Endothelial cell of umbilical vein (primary cell): ENCODE measurements at regions of chr3 and their contacts with region 1.

Region 1: GRCh38 chr3:138915503-138916498 is 31.1 kb downstream of the FOXL2 start:
- DNase-seq: peak; percentile 88
- H3K4me3 ChIP-seq: peak overlapping the region; percentile 12 to 81 (median 64)
- H3K27ac ChIP-seq: peak overlapping the region; percentile 74
- H3K4me1 ChIP-seq: peaks cover 8% of the 10 kb centered on the region
- H3K27me3 ChIP-seq: no peaks in the 10 kb centered on the region
- CTCF ChIP-seq: peak; percentile 92 to 97
- POLR2A ChIP-seq: no peak

Region 2: GRCh38 chr3:138241061-138241460 is 674.7 kb before region 1 on chr3:
- CTCF ChIA-PET with region 1: no interaction called
- POLR2A ChIA-PET with region 1: no interaction called
- dilution Hi-C with region 1: no loop called
- intact Hi-C with region 1: no loop called
- DNase-seq: no peak
- H3K4me3 ChIP-seq: no peak overlapping the region
- H3K27ac ChIP-seq: no peak overlapping the region
- H3K4me1 ChIP-seq: no peaks in the 10 kb centered on the region
- H3K27me3 ChIP-seq: no peaks in the 10 kb centered on the region
- CTCF ChIP-seq: no peak
- POLR2A ChIP-seq: no peak

Region 3: DNA sequence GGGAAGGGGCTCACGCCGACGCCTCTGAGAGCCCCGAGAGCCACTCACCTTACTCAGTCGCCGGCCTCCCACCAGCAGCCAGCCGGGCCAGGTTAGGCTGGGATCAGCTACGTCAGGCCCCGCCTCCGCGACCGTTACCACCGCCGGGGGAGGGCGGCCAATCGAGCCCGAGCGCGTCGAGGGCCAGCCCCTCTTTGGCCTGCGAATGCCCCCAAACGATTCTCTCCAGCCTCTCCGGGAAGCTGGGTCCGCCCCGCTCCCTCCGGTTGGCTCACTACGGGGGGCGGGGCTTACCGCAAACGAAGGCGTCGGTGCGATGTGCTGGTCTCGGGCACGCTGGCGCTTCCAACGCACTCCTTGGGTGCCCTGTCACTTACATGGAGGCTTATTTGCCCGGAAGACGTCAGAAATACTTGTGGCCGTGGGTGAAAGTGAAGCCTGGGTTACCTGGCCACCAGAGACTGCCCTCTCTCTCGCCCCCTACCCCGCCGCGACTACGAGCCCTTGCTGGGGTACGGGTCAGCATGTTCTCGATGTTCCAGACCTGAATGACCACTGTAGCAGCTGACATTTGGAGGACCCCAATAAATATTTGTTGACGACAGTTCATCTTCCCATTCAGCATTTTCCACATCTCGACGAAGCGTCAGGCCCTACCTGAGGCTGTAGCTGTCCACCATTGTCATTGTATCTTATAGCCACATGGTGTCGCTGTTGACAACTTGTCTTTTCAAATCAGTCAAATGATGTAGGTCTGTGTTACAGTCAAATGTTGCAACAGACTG is 321.5 kb before region 1 on chr3 and contains the start of gene CEP70:
- CTCF ChIA-PET with region 1: interaction called, 182 read pairs
- POLR2A ChIA-PET with region 1: interaction called, 11 read pairs
- dilution Hi-C with region 1: no loop called
- intact Hi-C with region 1: loop called (anchors 1 kb)
- DNase-seq: peak; percentile 96
- H3K4me3 ChIP-seq: peak within 1 kb of the TSS; percentile 56 to 92 (median 63)
- H3K27ac ChIP-seq: peak within 1 kb of the TSS; percentile 46
- H3K4me1 ChIP-seq: no peaks in the 10 kb centered on the region
- H3K27me3 ChIP-seq: no peaks in the 10 kb centered on the region
- CTCF ChIP-seq: peak; percentile 72 to 84
- POLR2A ChIP-seq: peak; percentile 69
- total RNA-seq, gene CEP70: 14.7 and 16.9 TPM in 2 replicates

Region 4: GRCh38 chr3:138678086-138678485 is 237.7 kb before region 1 on chr3:
- CTCF ChIA-PET with region 1: interaction called, 11 read pairs
- POLR2A ChIA-PET with region 1: no interaction called
- dilution Hi-C with region 1: no loop called
- intact Hi-C with region 1: no loop called
- DNase-seq: no peak
- H3K4me3 ChIP-seq: no peak overlapping the region
- H3K27ac ChIP-seq: no peak overlapping the region
- H3K4me1 ChIP-seq: no peaks in the 10 kb centered on the region
- H3K27me3 ChIP-seq: no peaks in the 10 kb centered on the region
- CTCF ChIP-seq: no peak
- POLR2A ChIP-seq: no peak

Region 5: GRCh38 chr3:138726946-138727730 is 188.7 kb before region 1 on chr3:
- CTCF ChIA-PET with region 1: interaction called, 25 read pairs
- POLR2A ChIA-PET with region 1: no interaction called
- dilution Hi-C with region 1: no loop called
- intact Hi-C with region 1: no loop called
- DNase-seq: no peak
- H3K4me3 ChIP-seq: no peak overlapping the region
- H3K27ac ChIP-seq: no peak overlapping the region
- H3K4me1 ChIP-seq: peaks cover 2% of the 10 kb centered on the region
- H3K27me3 ChIP-seq: no peaks in the 10 kb centered on the region
- CTCF ChIP-seq: no peak
- POLR2A ChIP-seq: no peak

Region 6: GRCh38 chr3:138781012-138781470 is 134.8 kb before region 1 on chr3:
- CTCF ChIA-PET with region 1: interaction called, 54 read pairs
- POLR2A ChIA-PET with region 1: no interaction called
- dilution Hi-C with region 1: no loop called
- intact Hi-C with region 1: no loop called
- DNase-seq: no peak
- H3K4me3 ChIP-seq: no peak overlapping the region
- H3K27ac ChIP-seq: no peak overlapping the region
- H3K4me1 ChIP-seq: no peaks in the 10 kb centered on the region
- H3K27me3 ChIP-seq: no peaks in the 10 kb centered on the region
- CTCF ChIP-seq: no peak
- POLR2A ChIP-seq: no peak

Region 7: GRCh38 chr3:138834359-138835212 is 81.2 kb before region 1 on chr3 and contains the start of gene PIK3CB:
- CTCF ChIA-PET with region 1: interaction called, 34 read pairs
- POLR2A ChIA-PET with region 1: no interaction called
- dilution Hi-C with region 1: no loop called
- intact Hi-C with region 1: loop called (anchors 1 kb)
- DNase-seq: peak; percentile 85
- H3K4me3 ChIP-seq: peak within 1 kb of the TSS; percentile 65 to 82 (median 80)
- H3K27ac ChIP-seq: peak within 1 kb of the TSS; percentile 91
- H3K4me1 ChIP-seq: peaks cover 16% of the 10 kb centered on the region
- H3K27me3 ChIP-seq: no peaks in the 10 kb centered on the region
- CTCF ChIP-seq: peak; percentile 11 to 41
- POLR2A ChIP-seq: peak; percentile 87
- total RNA-seq, gene PIK3CB: 28.4 and 29.8 TPM in 2 replicates

Region 8: GRCh38 chr3:138890555-138891187 is 25.1 kb before region 1 on chr3:
- CTCF ChIA-PET with region 1: interaction called, 25 read pairs
- POLR2A ChIA-PET with region 1: no interaction called
- dilution Hi-C with region 1: no loop called
- intact Hi-C with region 1: loop called (anchors 1 kb)
- DNase-seq: no peak
- H3K4me3 ChIP-seq: no peak overlapping the region
- H3K27ac ChIP-seq: peak overlapping the region; percentile 64
- H3K4me1 ChIP-seq: peaks cover 4% of the 10 kb centered on the region
- H3K27me3 ChIP-seq: no peaks in the 10 kb centered on the region
- CTCF ChIP-seq: no peak
- POLR2A ChIP-seq: no peak

Region 9: DNA sequence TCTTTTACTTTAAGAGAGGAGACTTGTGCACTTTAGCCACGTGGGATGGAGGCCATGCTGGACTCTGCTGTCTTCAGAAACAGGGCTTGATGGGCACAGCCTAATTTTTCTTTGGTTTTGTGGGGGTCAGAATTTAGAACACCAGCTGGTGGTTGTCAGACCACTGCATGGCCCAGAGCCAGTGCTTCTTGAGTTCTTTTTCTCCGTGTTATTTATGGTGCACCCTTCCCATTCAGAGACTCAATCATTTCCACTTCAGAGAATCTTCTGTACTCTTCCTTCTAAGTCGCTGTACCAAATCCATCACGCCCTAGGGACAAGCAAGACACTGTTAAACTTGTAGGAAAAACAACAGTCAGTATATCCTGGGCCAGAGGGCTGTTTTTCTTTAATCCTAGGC is 70.1 kb after region 1 on chr3:
- CTCF ChIA-PET with region 1: no interaction called
- POLR2A ChIA-PET with region 1: no interaction called
- dilution Hi-C with region 1: no loop called
- intact Hi-C with region 1: no loop called
- DNase-seq: no peak
- H3K4me3 ChIP-seq: no peak overlapping the region
- H3K27ac ChIP-seq: no peak overlapping the region
- H3K4me1 ChIP-seq: no peaks in the 10 kb centered on the region
- H3K27me3 ChIP-seq: peaks cover 3 to 6% of the 10 kb centered on the region in 2 experiments
- CTCF ChIP-seq: no peak
- POLR2A ChIP-seq: no peak

Region 10: GRCh38 chr3:139202226-139202958 is 286.6 kb after region 1 on chr3:
- CTCF ChIA-PET with region 1: no interaction called
- POLR2A ChIA-PET with region 1: no interaction called
- dilution Hi-C with region 1: no loop called
- intact Hi-C with region 1: no loop called
- DNase-seq: no peak
- H3K4me3 ChIP-seq: no peak overlapping the region
- H3K27ac ChIP-seq: no peak overlapping the region
- H3K4me1 ChIP-seq: no peaks in the 10 kb centered on the region
- H3K27me3 ChIP-seq: no peaks in the 10 kb centered on the region
- CTCF ChIP-seq: no peak
- POLR2A ChIP-seq: no peak